CD4-positive, alpha-beta T cell (primary cell): ENCODE measurements at regions of chr9 and their contacts with region 1.

Region 1: GRCh38 chr9:131178382-131178781 is 53.0 kb downstream of the NUP214 start:
- DNase-seq: peak; percentile 63 to 85 (median 74)
- ATAC-seq: peak; percentile 100
- H3K4me3 ChIP-seq: no peak overlapping the region
- H3K4me3 Mint-ChIP-seq: no peak overlapping the region
- H3K27ac ChIP-seq: no peak overlapping the region
- H3K27ac Mint-ChIP-seq: no peak overlapping the region
- H3K4me1 ChIP-seq: peaks cover 3% of the 10 kb centered on the region
- H3K4me1 Mint-ChIP-seq: peaks cover 26% of the 10 kb centered on the region
- H3K27me3 ChIP-seq: no peaks in the 10 kb centered on the region
- H3K27me3 Mint-ChIP-seq: no peaks in the 10 kb centered on the region
- CTCF ChIP-seq: peak; percentile 97

Region 2: GRCh38 chr9:131053896-131054295 is 124.5 kb before region 1 on chr9:
- CTCF ChIA-PET with region 1: no interaction called
- POLR2A ChIA-PET with region 1: no interaction called
- intact Hi-C with region 1: loop called in 1 of 2 experiments (anchors 1 kb)
- DNase-seq: no peak
- ATAC-seq: no peak
- H3K4me3 ChIP-seq: no peak overlapping the region
- H3K4me3 Mint-ChIP-seq: no peak overlapping the region
- H3K27ac ChIP-seq: no peak overlapping the region
- H3K27ac Mint-ChIP-seq: no peak overlapping the region
- H3K4me1 ChIP-seq: peaks cover 2% of the 10 kb centered on the region
- H3K4me1 Mint-ChIP-seq: no peaks in the 10 kb centered on the region
- H3K27me3 ChIP-seq: no peaks in the 10 kb centered on the region
- H3K27me3 Mint-ChIP-seq: no peaks in the 10 kb centered on the region
- CTCF ChIP-seq: no peak

Region 3: DNA sequence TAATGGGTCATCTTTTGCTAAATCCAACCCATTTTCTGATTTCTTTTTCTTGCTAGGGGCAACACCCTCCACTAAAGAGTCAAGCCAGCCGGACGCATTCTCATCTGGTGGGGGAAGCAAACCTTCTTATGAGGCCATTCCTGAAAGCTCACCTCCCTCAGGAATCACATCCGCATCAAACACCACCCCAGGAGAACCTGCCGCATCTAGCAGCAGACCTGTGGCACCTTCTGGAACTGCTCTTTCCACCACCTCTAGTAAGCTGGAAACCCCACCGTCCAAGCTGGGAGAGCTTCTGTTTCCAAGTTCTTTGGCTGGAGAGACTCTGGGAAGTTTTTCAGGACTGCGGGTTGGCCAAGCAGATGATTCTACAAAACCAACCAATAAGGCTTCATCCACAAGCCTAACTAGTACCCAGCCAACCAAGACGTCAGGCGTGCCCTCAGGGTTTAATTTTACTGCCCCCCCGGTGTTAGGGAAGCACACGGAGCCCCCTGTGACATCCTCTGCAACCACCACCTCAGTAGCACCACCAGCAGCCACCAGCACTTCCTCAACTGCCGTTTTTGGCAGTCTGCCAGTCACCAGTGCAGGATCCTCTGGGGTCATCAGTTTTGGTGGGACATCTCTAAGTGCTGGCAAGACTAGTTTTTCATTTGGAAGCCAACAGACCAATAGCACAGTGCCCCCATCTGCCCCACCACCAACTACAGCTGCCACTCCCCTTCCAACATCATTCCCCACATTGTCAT is 19.0 kb after region 1 on chr9:
- CTCF ChIA-PET with region 1: no interaction called
- POLR2A ChIA-PET with region 1: no interaction called
- intact Hi-C with region 1: no loop called
- DNase-seq: no peak
- ATAC-seq: no peak
- H3K4me3 ChIP-seq: no peak overlapping the region
- H3K4me3 Mint-ChIP-seq: no peak overlapping the region
- H3K27ac ChIP-seq: no peak overlapping the region
- H3K27ac Mint-ChIP-seq: no peak overlapping the region
- H3K4me1 ChIP-seq: no peaks in the 10 kb centered on the region
- H3K4me1 Mint-ChIP-seq: no peaks in the 10 kb centered on the region
- H3K27me3 ChIP-seq: no peaks in the 10 kb centered on the region
- H3K27me3 Mint-ChIP-seq: no peaks in the 10 kb centered on the region
- CTCF ChIP-seq: no peak

Region 4: GRCh38 chr9:131237931-131238401 is 59.6 kb after region 1 on chr9:
- CTCF ChIA-PET with region 1: interaction called, 3 read pairs
- POLR2A ChIA-PET with region 1: no interaction called
- intact Hi-C with region 1: loop called in 1 of 2 experiments (anchors 5 kb)
- DNase-seq: peak; percentile 74 to 93 (median 82)
- ATAC-seq: peak; percentile 92
- H3K4me3 ChIP-seq: peak overlapping the region; percentile 43
- H3K4me3 Mint-ChIP-seq: peak overlapping the region; percentile 84
- H3K27ac ChIP-seq: peak overlapping the region; percentile 52 to 79
- H3K27ac Mint-ChIP-seq: peak overlapping the region; percentile 95
- H3K4me1 ChIP-seq: peaks cover 76% of the 10 kb centered on the region
- H3K4me1 Mint-ChIP-seq: peaks cover 52% of the 10 kb centered on the region
- H3K27me3 ChIP-seq: no peaks in the 10 kb centered on the region
- H3K27me3 Mint-ChIP-seq: no peaks in the 10 kb centered on the region
- CTCF ChIP-seq: no peak

Region 5: DNA sequence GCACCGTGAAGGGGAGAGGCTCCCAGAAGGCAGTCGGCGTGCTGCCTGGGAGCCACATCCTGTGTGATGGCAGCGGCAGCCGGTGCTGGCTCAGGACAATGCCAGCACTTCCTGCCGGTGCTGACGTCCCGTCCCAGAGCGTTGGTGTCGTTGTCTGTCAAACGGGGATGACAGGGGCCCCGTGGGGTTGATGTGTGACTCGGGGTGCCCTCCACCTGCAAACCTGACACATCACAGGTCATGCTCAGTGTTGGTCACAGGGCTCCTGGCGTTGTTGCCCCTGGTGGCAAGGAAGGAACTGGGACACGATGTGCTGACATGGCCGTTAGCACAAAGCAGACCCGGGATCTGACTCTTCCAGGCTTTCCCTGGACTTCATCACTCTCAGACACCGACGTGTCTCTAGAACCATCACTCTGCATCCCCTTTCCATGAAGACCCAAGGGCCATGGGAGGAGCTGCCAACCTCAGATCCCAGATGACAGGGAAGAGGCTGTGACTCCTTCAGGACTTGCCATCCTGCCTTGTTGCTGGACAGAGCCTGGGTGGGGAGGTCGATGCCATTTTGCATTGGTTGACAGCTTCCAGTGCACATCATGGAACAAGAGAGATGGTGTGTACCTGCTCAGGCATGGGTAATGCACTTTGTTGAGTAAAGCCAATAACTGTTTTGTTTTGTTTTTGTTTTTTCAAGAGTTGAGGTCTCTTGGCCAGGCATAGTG is 132.6 kb after region 1 on chr9:
- CTCF ChIA-PET with region 1: no interaction called
- POLR2A ChIA-PET with region 1: no interaction called
- intact Hi-C with region 1: loop called in 1 of 2 experiments (anchors 1 kb)
- DNase-seq: peak; percentile 36 to 88 (median 60)
- ATAC-seq: peak; percentile 98
- H3K4me3 ChIP-seq: peak overlapping the region; percentile 40
- H3K4me3 Mint-ChIP-seq: peak overlapping the region; percentile 54
- H3K27ac ChIP-seq: no peak overlapping the region
- H3K27ac Mint-ChIP-seq: peak overlapping the region; percentile 73
- H3K4me1 ChIP-seq: peaks cover 15% of the 10 kb centered on the region
- H3K4me1 Mint-ChIP-seq: peaks cover 16% of the 10 kb centered on the region
- H3K27me3 ChIP-seq: no peaks in the 10 kb centered on the region
- H3K27me3 Mint-ChIP-seq: no peaks in the 10 kb centered on the region
- CTCF ChIP-seq: no peak

Region 6: DNA sequence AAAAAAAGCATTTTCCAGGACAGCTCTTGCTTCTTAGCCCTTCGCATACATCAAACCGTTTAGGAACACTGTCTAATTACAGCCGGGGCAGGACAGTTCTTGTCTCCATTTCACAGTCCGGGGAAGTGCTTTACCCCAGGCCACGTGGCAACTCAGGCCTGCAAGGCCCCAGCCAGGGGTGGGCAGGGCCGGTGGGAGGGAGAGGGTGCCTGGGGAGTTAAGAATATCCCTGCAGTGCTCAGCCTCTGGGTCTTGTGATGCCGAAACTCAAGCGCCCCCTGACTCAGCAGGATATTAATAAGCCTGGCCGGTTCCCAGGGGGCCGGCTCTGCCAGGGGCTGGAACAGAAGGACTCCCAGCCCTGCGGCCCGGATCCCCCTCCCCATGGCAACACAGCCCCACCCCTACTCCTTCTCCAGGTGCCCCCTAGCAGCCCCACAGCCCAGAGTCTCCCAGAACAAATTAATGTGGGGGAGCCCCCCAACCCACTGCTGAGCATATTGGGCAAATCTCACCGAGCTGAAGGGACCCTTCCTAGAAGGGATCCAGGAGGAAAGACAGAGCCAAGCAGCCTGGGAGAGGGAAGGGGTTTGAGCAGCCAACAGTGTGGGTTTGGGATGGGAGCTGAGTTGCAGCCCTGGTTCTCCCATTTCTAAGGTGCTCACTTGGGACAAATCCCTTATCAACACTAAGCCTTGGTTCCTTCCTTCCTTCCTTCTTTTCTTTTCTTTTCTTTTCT is 156.4 kb after region 1 on chr9:
- CTCF ChIA-PET with region 1: interaction called, 80 read pairs
- POLR2A ChIA-PET with region 1: interaction called, 6 read pairs
- intact Hi-C with region 1: loop called (anchors 1 kb)
- DNase-seq: no peak
- ATAC-seq: no peak
- H3K4me3 ChIP-seq: no peak overlapping the region
- H3K4me3 Mint-ChIP-seq: no peak overlapping the region
- H3K27ac ChIP-seq: no peak overlapping the region
- H3K27ac Mint-ChIP-seq: no peak overlapping the region
- H3K4me1 ChIP-seq: peaks cover 7% of the 10 kb centered on the region
- H3K4me1 Mint-ChIP-seq: peaks cover 4% of the 10 kb centered on the region
- H3K27me3 ChIP-seq: no peaks in the 10 kb centered on the region
- H3K27me3 Mint-ChIP-seq: no peaks in the 10 kb centered on the region
- CTCF ChIP-seq: no peak